Activated CD4-positive, alpha-beta T cell treated with anti-CD3 and anti-CD28 coated beads for 36 hours (primary cell): ENCODE measurements at regions of chr7 and their contacts with region 1.

Region 1: DNA sequence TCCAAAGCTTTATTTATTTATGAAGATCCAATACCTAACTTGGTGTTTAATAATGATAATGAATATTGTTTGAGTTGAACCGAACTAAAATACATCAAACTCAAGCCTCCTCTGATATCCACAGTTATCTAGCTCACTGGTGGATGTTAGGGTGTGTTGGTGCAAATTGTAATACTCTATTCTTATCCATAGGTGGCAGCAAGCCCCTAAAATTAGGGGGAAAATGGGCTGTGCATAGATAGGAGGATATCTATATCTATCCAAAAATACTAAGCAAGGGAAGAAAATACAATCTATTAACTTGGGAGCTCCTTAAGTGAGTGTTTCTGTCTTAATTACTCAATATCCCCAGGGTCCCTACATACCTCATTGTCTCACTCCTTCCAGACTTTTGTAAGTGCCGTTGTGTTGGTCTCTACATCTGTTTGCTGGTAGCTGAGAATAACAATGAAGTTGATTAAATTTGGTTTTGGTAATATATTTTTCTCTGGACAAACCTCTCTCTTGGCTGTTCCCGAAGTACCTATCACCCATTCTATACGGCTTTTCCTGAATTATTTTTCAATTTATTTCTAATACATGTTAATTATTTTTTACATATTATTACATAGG is 55.0 kb upstream of the VWDE start:
- DNase-seq: no peak
- ATAC-seq: peak; percentile 81
- H3K4me3 Mint-ChIP-seq: no peak overlapping the region
- H3K27ac Mint-ChIP-seq: no peak overlapping the region
- H3K4me1 Mint-ChIP-seq: no peaks in the 10 kb centered on the region
- H3K27me3 Mint-ChIP-seq: peaks cover 12% of the 10 kb centered on the region

Region 2: DNA sequence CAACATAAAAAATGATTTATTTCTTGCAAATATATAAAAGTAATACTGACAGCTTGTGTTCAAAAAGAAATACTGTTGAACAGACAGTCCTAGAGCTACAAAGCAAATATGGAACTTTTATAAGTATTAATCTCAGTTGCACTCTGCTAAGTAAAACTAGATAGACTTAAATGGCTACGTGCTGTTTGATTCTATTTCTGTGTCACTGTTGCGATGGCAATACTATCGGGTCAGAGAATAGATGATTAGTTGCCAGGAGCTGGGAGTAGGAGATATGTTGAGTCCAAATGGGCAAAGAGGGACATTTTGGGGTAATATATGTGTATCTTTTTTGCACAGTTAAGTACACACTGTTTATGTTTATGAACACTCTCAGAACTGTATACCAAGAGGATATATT is 13.8 kb before region 1 on chr7:
- CTCF ChIA-PET with region 1: interaction called, 19 read pairs
- POLR2A ChIA-PET with region 1: no interaction called
- intact Hi-C with region 1: no loop called
- DNase-seq: no peak
- ATAC-seq: no peak
- H3K4me3 Mint-ChIP-seq: no peak overlapping the region
- H3K27ac Mint-ChIP-seq: no peak overlapping the region
- H3K4me1 Mint-ChIP-seq: no peaks in the 10 kb centered on the region
- H3K27me3 Mint-ChIP-seq: peaks cover 8% of the 10 kb centered on the region

Region 3: DNA sequence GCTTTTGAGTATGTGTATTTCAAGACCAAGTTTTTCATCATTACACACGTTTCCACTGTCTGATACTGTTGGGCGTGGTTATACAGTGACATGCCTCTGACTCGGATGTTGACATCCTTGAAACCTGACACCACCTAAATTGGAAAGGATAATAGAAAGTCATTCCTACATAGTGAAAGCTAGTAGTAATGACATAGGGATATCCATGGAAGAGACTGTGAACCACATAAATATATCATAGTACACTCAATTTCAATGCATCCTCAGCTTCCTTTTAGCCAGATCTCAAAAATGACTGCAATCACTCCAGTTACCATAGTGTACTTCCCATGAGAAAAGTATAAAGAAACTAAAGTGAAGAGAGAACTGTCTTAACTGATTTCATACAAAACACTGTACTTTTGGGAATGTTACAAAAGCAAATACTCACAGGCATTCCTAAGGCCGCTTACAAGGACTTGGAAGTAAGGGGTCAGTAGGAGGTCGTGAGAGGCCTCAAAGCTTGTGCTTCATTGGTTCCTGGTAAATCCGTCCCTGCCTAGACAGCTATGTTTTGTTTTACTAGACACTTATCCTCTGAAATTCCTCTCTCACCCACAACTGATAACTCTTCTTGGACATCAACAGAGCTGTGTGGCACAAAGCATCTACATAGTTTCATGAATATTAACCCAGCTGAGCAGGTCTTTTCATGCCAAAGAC is 16.9 kb after region 1 on chr7:
- CTCF ChIA-PET with region 1: interaction called, 25 read pairs
- POLR2A ChIA-PET with region 1: no interaction called
- intact Hi-C with region 1: no loop called
- DNase-seq: no peak
- ATAC-seq: no peak
- H3K4me3 Mint-ChIP-seq: no peak overlapping the region
- H3K27ac Mint-ChIP-seq: no peak overlapping the region
- H3K4me1 Mint-ChIP-seq: no peaks in the 10 kb centered on the region
- H3K27me3 Mint-ChIP-seq: no peaks in the 10 kb centered on the region

Region 4: DNA sequence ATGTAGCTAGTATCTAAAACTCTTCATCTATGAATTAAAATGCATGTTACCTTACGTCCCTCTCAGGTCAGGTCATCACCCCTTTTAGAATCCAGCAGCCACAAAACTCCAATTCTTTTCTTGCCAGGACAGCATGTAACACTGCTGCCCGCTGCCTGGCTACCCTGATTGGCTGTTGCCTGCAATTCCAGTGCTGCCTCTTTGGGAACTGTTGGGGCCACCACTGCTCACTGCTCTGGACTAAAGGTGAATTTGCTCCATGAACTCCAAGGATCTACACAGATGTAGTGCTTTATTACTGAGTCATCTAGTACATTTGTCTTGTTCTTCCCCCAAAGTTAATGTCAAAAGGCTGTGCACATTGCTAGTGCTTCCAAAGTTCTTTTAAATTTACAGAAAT is 152.3 kb after region 1 on chr7:
- CTCF ChIA-PET with region 1: no interaction called
- POLR2A ChIA-PET with region 1: no interaction called
- intact Hi-C with region 1: no loop called
- DNase-seq: no peak
- ATAC-seq: no peak
- H3K4me3 Mint-ChIP-seq: no peak overlapping the region
- H3K27ac Mint-ChIP-seq: no peak overlapping the region
- H3K4me1 Mint-ChIP-seq: no peaks in the 10 kb centered on the region
- H3K27me3 Mint-ChIP-seq: peaks cover 2% of the 10 kb centered on the region